Naive thymus-derived CD4-positive, alpha-beta T cell (primary cell): ENCODE measurements at regions of chr7 and their contacts with region 1.

Region 1: DNA sequence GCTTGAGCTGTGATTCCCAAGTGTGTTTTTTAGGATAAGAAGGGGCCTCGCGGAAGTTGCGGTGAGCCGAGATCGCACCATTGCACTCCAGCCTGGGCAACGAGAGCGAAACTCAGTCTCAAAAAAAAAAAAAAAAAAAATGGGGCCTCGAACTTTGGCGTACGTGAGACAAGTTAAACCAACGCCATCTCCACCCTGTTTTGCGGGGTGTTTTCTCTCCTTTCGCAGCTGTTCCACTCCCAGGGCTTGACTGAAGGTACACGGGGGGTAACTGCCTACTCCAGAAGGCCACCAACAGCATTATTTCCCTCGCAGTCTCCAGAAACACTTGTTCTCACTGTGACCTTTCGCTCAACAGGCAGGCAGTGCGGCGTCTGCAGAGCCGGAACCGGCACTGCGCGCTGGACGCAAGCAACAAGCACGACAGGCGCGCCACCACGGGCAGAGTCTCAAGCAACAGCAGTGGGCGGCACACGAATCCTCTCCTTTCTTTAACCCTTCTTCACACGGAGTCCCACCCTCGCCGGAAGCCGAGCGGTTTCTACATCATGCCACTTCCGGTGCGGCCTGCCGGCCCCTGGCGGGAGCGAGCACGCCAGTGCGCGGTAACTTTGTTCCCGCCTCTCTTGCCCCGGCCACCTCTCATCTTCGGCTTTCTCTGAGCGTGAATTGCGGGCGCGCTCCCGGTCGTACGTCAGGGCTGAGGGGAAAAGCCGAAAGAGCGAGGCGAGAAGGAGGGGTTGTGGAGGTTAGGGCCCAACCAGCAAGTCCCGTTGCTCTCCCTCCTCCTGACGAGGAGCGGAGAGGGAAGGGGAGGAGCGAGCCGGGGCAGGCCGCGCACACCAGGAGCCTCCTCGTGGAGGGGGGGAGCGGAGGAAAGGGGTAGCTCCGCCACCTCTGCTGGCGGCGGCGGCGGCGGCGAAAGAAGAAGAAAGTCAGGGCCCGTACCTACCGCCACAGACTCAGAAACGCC is 814 bp upstream of the CDK13 start:
- DNase-seq: peak; percentile 91 to 100 (median 99)
- ATAC-seq: peak; percentile 85
- H3K4me3 ChIP-seq: peak overlapping the region; percentile 58
- H3K4me3 Mint-ChIP-seq: peak overlapping the region; percentile 90 to 100 (median 96)
- H3K27ac ChIP-seq: peak overlapping the region; percentile 99
- H3K27ac Mint-ChIP-seq: peak overlapping the region; percentile 98 to 100 (median 99)
- H3K4me1 ChIP-seq: peaks cover 21% of the 10 kb centered on the region in 2 donors
- H3K4me1 Mint-ChIP-seq: peaks cover 22 to 48% (median 37%) of the 10 kb centered on the region in 7 donors
- H3K27me3 ChIP-seq: no peaks in the 10 kb centered on the region
- H3K27me3 Mint-ChIP-seq: peaks cover 0 to 10% (median 0%) of the 10 kb centered on the region in 5 donors

Region 2: GRCh38 chr7:38369816-38370493 is 1579.3 kb before region 1 on chr7:
- CTCF ChIA-PET with region 1: no interaction called
- POLR2A ChIA-PET with region 1: no interaction called
- intact Hi-C with region 1: loop called in 1 of 2 experiments (anchors 10 kb)
- DNase-seq: peak; percentile 39 to 79 (median 63)
- ATAC-seq: peak; percentile 89
- H3K4me3 ChIP-seq: no peak overlapping the region
- H3K4me3 Mint-ChIP-seq: peak overlapping the region; percentile 9 to 64 (median 56)
- H3K27ac ChIP-seq: peak overlapping the region; percentile 64
- H3K27ac Mint-ChIP-seq: peak overlapping the region in 8 of 9 donors; percentile 85 to 97 (median 92)
- H3K4me1 ChIP-seq: peaks cover 47% of the 10 kb centered on the region in 2 donors
- H3K4me1 Mint-ChIP-seq: peaks cover 33 to 79% (median 69%) of the 10 kb centered on the region in 7 donors
- H3K27me3 ChIP-seq: no peaks in the 10 kb centered on the region
- H3K27me3 Mint-ChIP-seq: no peaks in the 10 kb centered on the region

Region 3: GRCh38 chr7:39580149-39580874 is 368.9 kb before region 1 on chr7:
- CTCF ChIA-PET with region 1: no interaction called
- POLR2A ChIA-PET with region 1: no interaction called
- intact Hi-C with region 1: loop called in 1 of 2 experiments (anchors 2 kb)
- DNase-seq: peak; percentile 38 to 79 (median 73)
- ATAC-seq: peak; percentile 98
- H3K4me3 ChIP-seq: no peak overlapping the region
- H3K4me3 Mint-ChIP-seq: no peak overlapping the region
- H3K27ac ChIP-seq: no peak overlapping the region
- H3K27ac Mint-ChIP-seq: peak overlapping the region in 5 of 9 donors; percentile 23 to 61 (median 44)
- H3K4me1 ChIP-seq: no peaks in the 10 kb centered on the region
- H3K4me1 Mint-ChIP-seq: peaks cover 2 to 12% (median 10%) of the 10 kb centered on the region in 7 donors
- H3K27me3 ChIP-seq: no peaks in the 10 kb centered on the region
- H3K27me3 Mint-ChIP-seq: no peaks in the 10 kb centered on the region

Region 4: DNA sequence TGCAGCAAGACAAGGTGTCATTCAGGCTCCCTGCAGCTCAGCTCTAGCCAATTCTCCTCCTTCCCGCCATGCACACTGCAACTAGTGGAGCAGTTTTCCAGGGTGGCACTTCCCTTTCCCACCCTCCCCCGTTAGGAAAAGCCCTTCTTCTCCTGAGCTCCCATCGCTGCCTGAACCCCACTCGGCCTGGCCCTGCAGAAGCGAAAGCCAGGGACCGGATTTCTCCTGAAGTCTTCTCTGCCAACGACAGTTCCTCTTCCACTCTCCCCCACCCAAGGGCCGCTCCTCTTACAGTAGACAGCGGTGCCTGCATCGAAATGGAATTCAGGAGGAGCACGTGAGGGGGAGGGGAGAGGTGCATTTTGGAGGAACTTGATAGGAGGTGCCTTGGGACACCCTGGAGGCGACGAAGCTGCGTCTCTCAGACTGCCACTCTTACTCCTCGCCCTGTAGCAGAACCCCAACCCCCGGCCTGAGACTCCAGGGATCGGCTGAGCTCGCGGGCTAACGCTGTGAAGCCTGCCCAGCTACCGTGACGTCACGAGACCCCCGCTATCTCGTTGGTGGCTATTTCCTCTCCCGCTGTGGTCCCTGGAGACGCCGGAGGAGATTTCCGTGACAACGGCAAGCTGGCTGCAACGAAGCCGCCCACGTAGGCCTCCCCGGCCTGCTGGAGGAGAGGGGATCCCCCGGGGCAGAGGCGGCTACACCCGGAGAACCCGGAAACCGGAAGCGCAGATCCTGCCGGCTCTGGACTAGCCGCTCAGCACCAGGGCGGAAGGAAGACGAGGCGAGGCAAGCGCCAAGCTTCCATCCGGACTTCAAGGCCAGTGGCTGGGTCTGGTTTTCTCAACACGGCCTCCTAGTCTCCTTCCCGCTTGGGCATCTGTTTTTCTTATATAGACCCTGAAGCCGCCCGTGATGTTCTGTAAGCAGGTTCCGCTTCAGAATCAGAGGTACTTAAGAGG is 216.1 kb before region 1 on chr7:
- CTCF ChIA-PET with region 1: no interaction called
- POLR2A ChIA-PET with region 1: interaction called, 4 read pairs
- intact Hi-C with region 1: loop called (anchors 1 to 5 kb)
- DNase-seq: peak; percentile 80 to 96 (median 91)
- ATAC-seq: peak; percentile 95
- H3K4me3 ChIP-seq: peak overlapping the region; percentile 83
- H3K4me3 Mint-ChIP-seq: peak overlapping the region; percentile 78 to 95 (median 92)
- H3K27ac ChIP-seq: peak overlapping the region; percentile 82
- H3K27ac Mint-ChIP-seq: peak overlapping the region; percentile 93 to 98 (median 96)
- H3K4me1 ChIP-seq: peaks cover 11 to 27% of the 10 kb centered on the region in 2 donors
- H3K4me1 Mint-ChIP-seq: peaks cover 13 to 46% (median 40%) of the 10 kb centered on the region in 7 donors
- H3K27me3 ChIP-seq: no peaks in the 10 kb centered on the region
- H3K27me3 Mint-ChIP-seq: peaks cover 0 to 9% (median 0%) of the 10 kb centered on the region in 5 donors

Region 5: DNA sequence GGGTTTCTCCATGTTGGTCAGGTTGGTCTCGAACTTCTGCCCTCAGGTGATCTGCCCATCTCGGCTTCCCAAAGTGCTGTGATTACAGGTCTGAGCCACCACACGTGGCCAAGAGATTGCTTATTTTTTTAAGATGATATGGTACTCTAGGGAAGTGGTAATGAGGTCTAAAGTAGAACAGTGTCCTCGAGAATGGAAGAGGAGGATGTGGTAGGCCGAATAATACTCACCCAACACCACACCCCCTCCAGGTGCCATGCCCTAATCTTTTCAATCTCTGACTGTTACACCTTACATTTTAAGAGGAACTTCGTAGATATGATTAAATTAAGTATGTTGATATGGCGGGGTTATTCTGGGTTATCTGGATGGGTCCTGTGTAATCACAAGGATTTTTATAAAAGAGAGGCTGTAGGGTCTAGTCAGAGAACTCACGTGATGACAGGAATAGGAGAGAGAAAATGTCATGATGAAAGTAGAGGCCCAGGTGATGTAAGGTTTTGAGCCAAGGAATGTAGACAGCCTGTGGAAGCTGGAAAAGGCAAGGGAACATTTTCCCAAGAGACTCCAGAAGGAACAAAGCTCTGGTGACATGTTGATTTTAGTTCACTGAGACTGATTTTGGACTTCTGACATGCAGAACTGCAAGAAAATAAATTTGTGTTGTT is 30.3 kb after region 1 on chr7:
- CTCF ChIA-PET with region 1: interaction called, 3 read pairs
- POLR2A ChIA-PET with region 1: interaction called, 7 read pairs
- intact Hi-C with region 1: loop called in 1 of 2 experiments (anchors 2 kb)
- DNase-seq: peak in 7 of 9 donors; percentile 18 to 54 (median 39)
- ATAC-seq: peak; percentile 81
- H3K4me3 ChIP-seq: no peak overlapping the region
- H3K4me3 Mint-ChIP-seq: no peak overlapping the region
- H3K27ac ChIP-seq: peak overlapping the region; percentile 35
- H3K27ac Mint-ChIP-seq: no peak overlapping the region
- H3K4me1 ChIP-seq: peaks cover 32 to 40% of the 10 kb centered on the region in 2 donors
- H3K4me1 Mint-ChIP-seq: peaks cover 5 to 21% (median 20%) of the 10 kb centered on the region in 7 donors
- H3K27me3 ChIP-seq: no peaks in the 10 kb centered on the region
- H3K27me3 Mint-ChIP-seq: no peaks in the 10 kb centered on the region

Region 6: DNA sequence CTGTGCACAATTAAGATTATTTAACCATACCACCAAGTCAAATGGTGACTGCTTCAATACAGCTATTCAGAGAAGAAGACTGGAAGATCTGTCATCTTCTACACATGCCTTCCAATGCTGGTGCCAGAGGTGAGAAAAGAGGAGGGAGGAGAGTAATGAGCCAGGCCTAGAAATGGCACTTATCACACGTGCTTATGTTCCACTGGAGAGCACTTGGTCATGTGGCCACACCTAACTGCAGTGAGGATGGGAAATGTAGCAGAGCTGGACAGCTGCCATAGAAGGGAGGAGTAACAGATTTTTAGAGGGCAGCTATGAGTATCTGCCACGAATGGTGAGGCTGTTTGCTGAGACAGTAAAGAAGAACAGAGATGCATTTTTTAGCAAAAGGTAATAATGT is 108.0 kb after region 1 on chr7:
- CTCF ChIA-PET with region 1: interaction called, 12 read pairs
- POLR2A ChIA-PET with region 1: interaction called, 6 read pairs
- intact Hi-C with region 1: loop called (anchors 1 kb)
- DNase-seq: no peak
- ATAC-seq: no peak
- H3K4me3 ChIP-seq: no peak overlapping the region
- H3K4me3 Mint-ChIP-seq: no peak overlapping the region
- H3K27ac ChIP-seq: no peak overlapping the region
- H3K27ac Mint-ChIP-seq: peak overlapping the region in 6 of 9 donors; percentile 14 to 69 (median 44)
- H3K4me1 ChIP-seq: no peaks in the 10 kb centered on the region
- H3K4me1 Mint-ChIP-seq: peaks cover 4 to 22% (median 13%) of the 10 kb centered on the region in 7 donors
- H3K27me3 ChIP-seq: no peaks in the 10 kb centered on the region
- H3K27me3 Mint-ChIP-seq: no peaks in the 10 kb centered on the region

Region 7: GRCh38 chr7:40162516-40162915 is 213.3 kb after region 1 on chr7:
- CTCF ChIA-PET with region 1: no interaction called
- POLR2A ChIA-PET with region 1: no interaction called
- intact Hi-C with region 1: no loop called
- DNase-seq: no peak
- ATAC-seq: no peak
- H3K4me3 ChIP-seq: no peak overlapping the region
- H3K4me3 Mint-ChIP-seq: no peak overlapping the region
- H3K27ac ChIP-seq: no peak overlapping the region
- H3K27ac Mint-ChIP-seq: no peak overlapping the region
- H3K4me1 ChIP-seq: no peaks in the 10 kb centered on the region
- H3K4me1 Mint-ChIP-seq: no peaks in the 10 kb centered on the region
- H3K27me3 ChIP-seq: no peaks in the 10 kb centered on the region
- H3K27me3 Mint-ChIP-seq: no peaks in the 10 kb centered on the region